BJ (cell line): ENCODE measurements at regions of chr1 and their contacts with region 1.

Region 1: GRCh38 chr1:117284399-117285215 is 73.9 kb upstream of the VTCN1 start:
- DNase-seq: peak; percentile 26
- H3K4me3 ChIP-seq: no peak overlapping the region
- H3K27me3 ChIP-seq: no peaks in the 10 kb centered on the region
- CTCF ChIP-seq: peak; percentile 64

Region 2: GRCh38 chr1:117059678-117060440 is 224.7 kb before region 1 on chr1 and contains the start of gene TTF2:
- CTCF ChIA-PET with region 1: interaction called, 147 read pairs
- POLR2A ChIA-PET with region 1: no interaction called
- DNase-seq: peak; percentile 93
- H3K4me3 ChIP-seq: peak within 1 kb of the TSS; percentile 78
- H3K27me3 ChIP-seq: no peaks in the 10 kb centered on the region
- CTCF ChIP-seq: peak; percentile 29; the same call in 1 of the 2 replicates
- polyA plus RNA-seq, gene TTF2: 8.9 and 10.1 TPM in 2 replicates

Region 3: GRCh38 chr1:117067533-117068370 is 216.9 kb before region 1 on chr1:
- CTCF ChIA-PET with region 1: interaction called, 147 read pairs
- POLR2A ChIA-PET with region 1: no interaction called
- DNase-seq: no peak
- H3K4me3 ChIP-seq: no peak overlapping the region
- H3K27me3 ChIP-seq: no peaks in the 10 kb centered on the region
- CTCF ChIP-seq: peak; percentile 76

Region 4: DNA sequence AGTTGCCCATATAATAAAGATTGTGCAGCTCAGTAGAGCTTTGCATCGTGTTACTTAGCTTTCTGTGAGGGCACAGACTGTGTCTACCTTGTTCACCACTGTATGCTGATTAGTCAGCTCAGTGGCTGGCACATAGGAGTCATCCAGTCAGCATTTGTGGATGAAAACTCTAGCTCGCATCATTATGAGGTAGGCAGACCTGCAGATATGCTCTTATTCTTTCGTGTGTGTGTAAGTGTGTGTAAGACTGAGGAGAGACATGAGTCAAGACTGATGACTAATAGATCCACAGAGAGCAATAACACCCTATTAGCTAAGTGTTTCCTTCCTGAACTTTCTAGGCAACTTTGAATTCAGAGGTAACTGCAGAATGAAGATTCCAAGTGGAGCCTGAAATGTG is 207.3 kb before region 1 on chr1:
- CTCF ChIA-PET with region 1: interaction called, 147 read pairs
- POLR2A ChIA-PET with region 1: no interaction called
- DNase-seq: no peak
- H3K4me3 ChIP-seq: no peak overlapping the region
- H3K27me3 ChIP-seq: no peaks in the 10 kb centered on the region
- CTCF ChIP-seq: no peak

Region 5: GRCh38 chr1:117101334-117101733 is 183.3 kb before region 1 on chr1:
- CTCF ChIA-PET with region 1: no interaction called
- POLR2A ChIA-PET with region 1: no interaction called
- DNase-seq: no peak
- H3K4me3 ChIP-seq: no peak overlapping the region
- H3K27me3 ChIP-seq: no peaks in the 10 kb centered on the region
- CTCF ChIP-seq: no peak

Region 6: GRCh38 chr1:117121776-117122697 is 162.6 kb before region 1 on chr1:
- CTCF ChIA-PET with region 1: interaction called, 17 read pairs
- POLR2A ChIA-PET with region 1: no interaction called
- DNase-seq: peak; percentile 90
- H3K4me3 ChIP-seq: peak overlapping the region; percentile 73
- H3K27me3 ChIP-seq: no peaks in the 10 kb centered on the region
- CTCF ChIP-seq: peak; percentile 92

Region 7: DNA sequence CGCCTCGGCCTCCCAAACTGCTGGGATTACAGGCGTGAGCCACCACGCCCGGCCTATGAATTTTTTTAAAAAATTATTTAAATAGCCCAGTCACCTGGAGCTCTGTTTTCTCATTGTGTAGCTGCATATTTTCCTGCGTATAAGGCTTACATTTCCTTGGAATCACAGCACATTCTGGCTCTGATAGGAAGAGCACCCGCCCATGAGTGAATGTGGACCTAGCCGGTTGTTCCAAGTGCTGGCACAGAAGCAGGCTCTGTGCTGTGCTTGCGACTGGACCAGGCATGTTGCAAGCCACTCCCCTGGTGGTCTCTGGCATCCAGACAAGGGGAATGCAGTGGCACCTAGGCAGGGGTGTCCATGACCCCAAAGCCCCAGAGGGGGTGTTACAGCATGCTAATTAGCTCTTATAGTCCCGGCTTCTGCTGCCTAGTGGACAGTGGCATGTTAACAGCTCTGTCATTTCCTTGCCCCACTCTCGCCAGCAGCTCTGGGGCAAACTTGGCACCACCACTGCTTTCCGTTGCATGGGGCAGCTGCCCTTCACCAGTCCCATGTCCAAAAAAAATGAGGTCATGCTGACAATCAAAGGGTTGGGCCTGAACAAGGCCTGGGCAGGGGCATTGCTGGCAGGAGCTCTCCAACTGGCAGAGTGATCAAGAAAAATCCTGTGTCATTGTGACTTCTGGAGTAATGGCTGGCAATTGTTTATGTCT is 68.7 kb before region 1 on chr1:
- CTCF ChIA-PET with region 1: no interaction called
- POLR2A ChIA-PET with region 1: no interaction called
- DNase-seq: no peak
- H3K4me3 ChIP-seq: no peak overlapping the region
- H3K27me3 ChIP-seq: 0 out of 2 replicates have a peak, but pooled peaks cover 1% of the 10 kb centered on the region
- CTCF ChIP-seq: no peak

Region 8: GRCh38 chr1:117231748-117232373 is 52.7 kb before region 1 on chr1:
- CTCF ChIA-PET with region 1: no interaction called
- POLR2A ChIA-PET with region 1: no interaction called
- DNase-seq: no peak
- H3K4me3 ChIP-seq: no peak overlapping the region
- H3K27me3 ChIP-seq: no peaks in the 10 kb centered on the region
- CTCF ChIP-seq: no peak

Region 9: DNA sequence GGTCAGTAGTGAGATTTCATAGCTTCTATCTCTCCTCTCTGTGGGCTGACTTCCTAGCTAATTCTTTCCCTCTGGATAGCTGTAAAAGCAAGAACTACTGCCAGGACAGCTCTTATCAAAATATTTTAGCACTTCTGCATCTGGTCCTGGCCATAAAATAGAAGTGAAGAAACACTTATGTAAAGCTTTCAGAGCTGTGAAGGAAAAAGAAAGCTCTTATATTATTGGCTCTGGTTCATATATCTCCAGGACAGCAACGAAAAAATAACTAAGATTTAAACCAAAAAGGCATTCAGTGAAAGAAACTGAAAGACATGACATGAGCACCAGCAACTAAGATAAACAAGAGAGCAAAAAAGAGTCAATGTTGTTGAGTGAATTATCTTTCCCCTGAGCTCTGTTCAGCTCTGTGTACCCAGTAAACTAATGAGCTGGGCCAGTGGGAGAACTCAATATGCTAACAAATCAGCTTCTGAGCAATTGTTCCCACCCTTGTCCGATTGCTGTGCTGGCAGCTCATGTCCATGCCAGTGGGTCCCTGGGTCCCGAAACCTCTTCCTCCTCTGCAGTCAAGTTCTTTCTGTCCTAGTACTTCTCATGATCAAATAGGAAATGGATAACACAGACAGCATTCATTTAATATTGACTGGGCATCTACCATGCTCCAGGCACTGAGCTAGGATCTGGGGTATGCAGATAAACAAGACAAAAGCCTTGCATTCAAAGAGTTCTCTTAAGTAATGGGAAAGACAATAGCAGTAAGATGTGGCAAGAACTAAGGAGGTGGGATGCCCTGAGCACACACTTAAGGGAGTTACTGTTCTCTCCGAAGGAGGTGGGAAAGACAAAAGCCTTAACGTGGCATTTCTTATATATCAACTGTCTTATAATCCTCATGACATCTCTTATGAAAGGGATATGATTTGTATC is 37.3 kb after region 1 on chr1:
- CTCF ChIA-PET with region 1: no interaction called
- POLR2A ChIA-PET with region 1: no interaction called
- DNase-seq: no peak
- H3K4me3 ChIP-seq: no peak overlapping the region
- H3K27me3 ChIP-seq: peaks cover 11% of the 10 kb centered on the region
- CTCF ChIP-seq: no peak